ENCODE measurements at regions of chr9 and their contacts with region 1.

Region 1: DNA sequence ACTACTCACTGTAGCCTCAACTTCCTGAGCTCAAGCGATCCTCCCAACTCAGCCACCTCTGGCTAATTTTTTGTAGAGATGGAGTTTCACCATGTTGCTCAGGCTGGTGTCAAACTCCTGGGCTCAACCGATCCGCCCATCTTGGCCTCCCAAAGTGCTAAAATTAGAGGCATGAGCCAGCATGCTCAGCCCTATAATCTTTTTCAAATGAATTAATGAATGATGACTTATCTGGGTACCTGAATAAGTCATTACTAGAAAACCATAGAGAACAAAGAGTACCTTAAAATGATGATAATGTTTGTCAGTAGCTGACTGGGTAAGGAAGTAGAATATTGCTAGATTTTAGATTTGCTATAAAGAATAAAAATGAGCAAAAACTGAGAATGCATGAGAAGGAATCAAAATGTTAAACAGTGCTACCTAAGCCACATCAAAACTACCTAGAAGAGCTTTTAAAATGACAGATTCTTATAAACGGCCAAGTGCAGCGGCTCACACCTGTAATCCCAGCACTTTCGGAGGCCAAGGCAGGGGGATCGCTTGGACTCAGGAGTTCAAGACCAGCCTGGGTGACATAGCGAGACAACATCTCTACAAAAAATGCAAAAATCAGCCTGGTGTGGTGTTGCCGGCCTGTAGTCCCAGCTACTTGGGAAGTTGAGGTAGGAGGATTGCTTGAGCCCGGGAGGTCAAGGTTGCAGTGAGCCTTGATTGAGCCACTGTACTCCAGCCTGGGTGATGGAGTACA is 13.6 kb downstream of the FNBP1 start:
- DNase-seq: peak; percentile 68
- H3K4me3 Mint-ChIP-seq: peak overlapping the region; percentile 45
- H3K27ac Mint-ChIP-seq: peak overlapping the region; percentile 85
- H3K4me1 Mint-ChIP-seq: peaks cover 96% of the 10 kb centered on the region
- H3K27me3 Mint-ChIP-seq: no peaks in the 10 kb centered on the region

Region 2: GRCh38 chr9:130015353-130016019 is 13.9 kb before region 1 on chr9:
- CTCF ChIA-PET with region 1: interaction called, 5 read pairs
- intact Hi-C with region 1: loop called (anchors 1 kb)
- DNase-seq: no peak
- H3K4me3 Mint-ChIP-seq: no peak overlapping the region
- H3K27ac Mint-ChIP-seq: no peak overlapping the region
- H3K4me1 Mint-ChIP-seq: peaks cover 68% of the 10 kb centered on the region
- H3K27me3 Mint-ChIP-seq: no peaks in the 10 kb centered on the region

Region 3: DNA sequence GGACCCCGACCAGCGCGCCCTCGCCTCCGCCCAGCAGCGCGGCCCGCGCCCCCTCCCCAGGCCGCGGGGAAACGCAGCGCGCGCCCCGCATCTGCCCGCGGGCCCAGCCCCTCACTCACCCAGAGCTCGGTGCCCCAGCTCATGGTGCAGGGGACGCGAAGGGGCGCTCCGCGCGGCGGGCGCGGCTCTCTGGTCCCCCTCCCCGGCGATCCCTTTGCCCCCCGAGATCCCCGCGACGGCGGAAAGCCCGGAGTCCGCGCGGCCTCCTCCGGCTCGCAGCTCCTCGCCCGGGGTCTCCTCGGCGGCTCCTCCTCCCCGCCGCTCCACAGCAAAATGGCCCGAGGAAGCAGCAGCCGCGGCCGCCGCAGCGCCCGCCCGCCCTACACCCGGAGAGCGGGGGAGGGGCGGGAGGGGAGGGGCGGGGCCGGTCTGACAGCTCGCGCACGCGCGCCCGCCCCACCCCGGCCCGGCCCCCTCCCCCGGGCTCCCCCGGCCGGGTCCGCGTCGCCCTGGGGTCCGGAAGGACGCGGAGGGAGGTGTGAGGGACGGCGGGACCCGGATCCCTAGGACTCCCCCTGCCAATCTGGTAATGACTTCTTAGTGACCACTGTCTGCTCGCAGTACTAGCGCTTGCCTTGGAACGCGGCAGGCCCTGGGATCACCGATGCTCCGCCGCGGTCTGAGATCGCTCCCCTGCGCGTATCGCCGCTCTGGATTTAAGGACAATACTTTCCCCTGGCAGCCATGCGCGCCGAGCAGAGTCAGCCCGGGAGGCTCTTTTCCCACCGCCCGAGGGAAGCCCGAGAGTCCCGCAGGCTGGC is 13.6 kb after region 1 on chr9 and contains the start of gene FNBP1:
- CTCF ChIA-PET with region 1: interaction called, 10 read pairs
- intact Hi-C with region 1: no loop called
- DNase-seq: peak; percentile 81
- H3K4me3 Mint-ChIP-seq: peak within 1 kb of the TSS; percentile 100
- H3K27ac Mint-ChIP-seq: peak within 1 kb of the TSS; percentile 100
- H3K4me1 Mint-ChIP-seq: peaks cover 39% of the 10 kb centered on the region
- H3K27me3 Mint-ChIP-seq: no peaks in the 10 kb centered on the region
- total RNA-seq, gene FNBP1: 126 to 128 TPM